ENCODE measurements at regions of chr4 and their contacts with region 1.

Region 1: DNA sequence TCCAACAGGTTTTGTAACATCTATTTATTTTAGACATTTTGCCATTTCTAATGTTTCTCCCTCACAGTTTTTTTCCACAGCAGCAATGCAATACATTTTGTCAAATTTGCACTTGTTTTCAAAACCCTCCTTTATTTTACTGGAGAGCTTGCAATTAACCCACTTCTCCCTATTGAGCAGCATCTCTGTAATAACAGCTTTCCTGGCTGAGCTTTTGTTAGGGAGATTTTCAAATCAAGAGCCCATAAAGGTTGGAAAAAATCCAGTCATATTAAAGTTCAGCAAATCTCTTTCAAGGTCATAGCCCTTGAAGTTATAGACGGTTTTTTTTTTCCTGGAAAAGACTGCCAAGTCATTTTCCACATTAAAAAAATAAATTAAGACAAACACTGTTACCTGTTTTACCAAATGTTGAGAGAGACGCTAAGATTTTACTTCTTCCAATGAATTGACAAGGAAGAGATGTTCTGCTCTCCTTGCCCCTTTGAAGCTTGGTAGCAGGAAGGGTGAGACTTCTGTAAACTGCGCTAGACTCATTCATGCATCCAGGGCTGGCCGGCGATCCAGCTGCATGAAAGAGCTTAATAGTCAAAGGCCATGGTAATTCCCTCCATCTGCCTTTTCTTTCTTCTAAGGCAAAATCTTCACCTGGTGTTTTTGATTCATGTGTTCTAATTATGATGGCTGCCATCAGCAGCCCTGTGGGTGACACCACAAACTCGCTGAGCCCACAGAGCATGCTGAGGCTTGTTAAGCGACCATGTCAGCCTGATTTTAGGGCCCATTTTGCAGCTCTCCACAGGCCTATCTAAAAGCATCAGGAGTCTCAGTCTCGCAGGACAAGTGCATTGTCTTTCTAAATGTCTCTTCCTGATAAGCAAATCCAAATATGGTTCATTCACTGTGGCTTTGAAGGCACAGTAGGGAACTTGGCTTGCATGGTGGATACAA is 450.3 kb upstream of the TENM3 start:
- DNase-seq: no peak
- H3K4me3 ChIP-seq: no peak overlapping the region
- CTCF ChIP-seq: no peak

Region 2: GRCh38 chr4:181858741-181859140 is 65.8 kb after region 1 on chr4:
- in situ Hi-C with region 1: loop called (anchors 5 kb)
- DNase-seq: no peak
- H3K4me3 ChIP-seq: no peak overlapping the region
- CTCF ChIP-seq: no peak